Mammary epithelial cell (primary cell): ENCODE measurements at regions of chr12 and their contacts with region 1.

Region 1: DNA sequence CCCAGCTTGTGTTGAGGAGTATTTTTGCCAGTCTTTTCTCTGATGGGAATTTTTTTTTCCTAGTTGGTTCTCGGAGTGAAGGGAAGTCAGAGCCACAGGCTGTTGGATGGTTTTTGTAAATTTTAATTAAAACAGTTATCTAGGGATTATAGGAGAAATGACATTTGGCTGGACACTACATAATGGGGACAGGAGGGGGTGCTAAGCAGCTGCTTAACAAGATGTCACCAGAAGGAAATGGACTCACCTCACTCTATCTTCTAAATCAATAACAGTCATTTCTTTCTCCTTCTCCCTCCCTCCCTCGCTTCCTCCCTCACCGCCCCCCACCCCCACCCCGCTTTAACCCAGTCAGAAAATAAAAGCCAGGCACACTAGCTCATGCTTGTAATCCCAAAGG is 93.4 kb upstream of the TMEM233 start:
- DNase-seq: no peak
- H3K4me3 ChIP-seq: no peak overlapping the region
- H3K27ac ChIP-seq: no peak overlapping the region
- H3K4me1 ChIP-seq: no peaks in the 10 kb centered on the region
- H3K27me3 ChIP-seq: no peaks in the 10 kb centered on the region
- CTCF ChIP-seq: no peak

Region 2: DNA sequence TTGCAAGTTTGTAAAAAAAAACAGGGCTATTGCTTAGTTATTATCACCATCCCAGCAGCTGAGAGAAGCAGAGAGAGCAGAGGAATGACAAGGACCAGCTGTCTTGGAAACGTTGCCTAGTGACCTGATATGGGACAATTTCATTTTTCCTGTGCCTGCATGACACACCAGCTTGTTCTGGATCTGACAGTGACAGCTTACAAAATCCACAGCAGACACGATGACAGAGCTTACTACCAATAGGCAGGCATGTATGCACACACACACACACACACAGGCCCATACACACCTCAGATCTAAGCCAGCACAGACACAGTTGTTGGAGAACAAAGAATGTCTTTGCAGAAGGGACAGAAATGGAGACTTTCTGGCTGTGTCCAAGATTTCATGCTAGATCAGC is 296.1 kb before region 1 on chr12:
- CTCF ChIA-PET with region 1: no interaction called
- dilution Hi-C with region 1: no loop called
- in situ Hi-C with region 1: no loop called
- intact Hi-C with region 1: no loop called
- DNase-seq: no peak
- H3K4me3 ChIP-seq: no peak overlapping the region
- H3K27ac ChIP-seq: no peak overlapping the region
- H3K4me1 ChIP-seq: no peaks in the 10 kb centered on the region
- H3K27me3 ChIP-seq: no peaks in the 10 kb centered on the region
- CTCF ChIP-seq: no peak

Region 3: DNA sequence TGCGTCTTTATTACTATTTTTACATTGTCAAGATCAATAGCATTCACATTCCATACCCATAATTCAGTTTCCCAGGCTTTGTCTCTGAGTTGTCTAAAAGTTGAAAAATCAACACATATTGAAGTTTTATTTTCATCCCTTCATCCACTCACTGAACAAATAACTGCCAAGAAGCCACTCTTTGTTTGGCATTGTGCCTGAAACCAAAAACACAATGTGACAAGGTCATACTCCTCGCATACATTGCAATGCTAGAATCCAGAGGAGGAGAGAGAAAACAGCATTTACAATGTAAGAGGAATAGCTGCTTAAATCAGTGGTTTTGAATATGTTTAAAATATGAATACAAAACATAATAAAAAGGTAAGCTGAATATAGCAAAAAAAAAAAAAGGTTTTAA is 93.9 kb before region 1 on chr12:
- CTCF ChIA-PET with region 1: no interaction called
- dilution Hi-C with region 1: no loop called
- in situ Hi-C with region 1: no loop called
- intact Hi-C with region 1: no loop called
- DNase-seq: no peak
- H3K4me3 ChIP-seq: no peak overlapping the region
- H3K27ac ChIP-seq: no peak overlapping the region
- H3K4me1 ChIP-seq: no peaks in the 10 kb centered on the region
- H3K27me3 ChIP-seq: no peaks in the 10 kb centered on the region
- CTCF ChIP-seq: no peak

Region 4: GRCh38 chr12:119444456-119445044 is 55.7 kb before region 1 on chr12:
- CTCF ChIA-PET with region 1: no interaction called
- dilution Hi-C with region 1: loop called (anchors 5 kb)
- in situ Hi-C with region 1: no loop called
- intact Hi-C with region 1: no loop called
- DNase-seq: peak; percentile 3
- H3K4me3 ChIP-seq: no peak overlapping the region
- H3K27ac ChIP-seq: no peak overlapping the region
- H3K4me1 ChIP-seq: no peaks in the 10 kb centered on the region
- H3K27me3 ChIP-seq: no peaks in the 10 kb centered on the region
- CTCF ChIP-seq: peak; percentile 51 to 53